Endothelial cell of umbilical vein (primary cell): ENCODE measurements at regions of chr19 and their contacts with region 1.

Region 1: GRCh38 chr19:57578487-57579205 is at the start of gene ZNF416:
- DNase-seq: peak; percentile 96
- H3K4me3 ChIP-seq: peak within 1 kb of the TSS; percentile 79 to 93 (median 85)
- H3K27ac ChIP-seq: no peak within 1 kb of the TSS
- H3K4me1 ChIP-seq: peaks cover 10% of the 10 kb centered on the region
- H3K27me3 ChIP-seq: no peaks in the 10 kb centered on the region
- CTCF ChIP-seq: no peak
- POLR2A ChIP-seq: no peak
- total RNA-seq, gene ZNF416: 3.8 and 4.2 TPM in 2 replicates

Region 2: GRCh38 chr19:57435062-57435978 is 143.3 kb before region 1 on chr19 and contains the start of gene ZNF749:
- CTCF ChIA-PET with region 1: no interaction called
- POLR2A ChIA-PET with region 1: no interaction called
- dilution Hi-C with region 1: no loop called
- intact Hi-C with region 1: loop called (anchors 1 kb)
- DNase-seq: peak; percentile 98
- H3K4me3 ChIP-seq: peak within 1 kb of the TSS; percentile 58 to 81 (median 68)
- H3K27ac ChIP-seq: no peak within 1 kb of the TSS
- H3K4me1 ChIP-seq: peaks cover 10% of the 10 kb centered on the region
- H3K27me3 ChIP-seq: no peaks in the 10 kb centered on the region
- CTCF ChIP-seq: no peak
- POLR2A ChIP-seq: peak; percentile 14
- total RNA-seq, gene ZNF749: 8.9 and 11.5 TPM in 2 replicates

Region 3: GRCh38 chr19:57527136-57527881 is 51.3 kb before region 1 on chr19 and contains the start of gene ZNF549:
- CTCF ChIA-PET with region 1: no interaction called
- POLR2A ChIA-PET with region 1: no interaction called
- dilution Hi-C with region 1: no loop called
- intact Hi-C with region 1: loop called (anchors 5 kb)
- DNase-seq: peak; percentile 86
- H3K4me3 ChIP-seq: peak within 1 kb of the TSS; percentile 47 to 69 (median 63)
- H3K27ac ChIP-seq: peak within 1 kb of the TSS; percentile 7
- H3K4me1 ChIP-seq: peaks cover 3% of the 10 kb centered on the region
- H3K27me3 ChIP-seq: no peaks in the 10 kb centered on the region
- CTCF ChIP-seq: no peak
- POLR2A ChIP-seq: no peak
- total RNA-seq, gene ZNF549: 3.1 and 3.5 TPM in 2 replicates

Region 4: DNA sequence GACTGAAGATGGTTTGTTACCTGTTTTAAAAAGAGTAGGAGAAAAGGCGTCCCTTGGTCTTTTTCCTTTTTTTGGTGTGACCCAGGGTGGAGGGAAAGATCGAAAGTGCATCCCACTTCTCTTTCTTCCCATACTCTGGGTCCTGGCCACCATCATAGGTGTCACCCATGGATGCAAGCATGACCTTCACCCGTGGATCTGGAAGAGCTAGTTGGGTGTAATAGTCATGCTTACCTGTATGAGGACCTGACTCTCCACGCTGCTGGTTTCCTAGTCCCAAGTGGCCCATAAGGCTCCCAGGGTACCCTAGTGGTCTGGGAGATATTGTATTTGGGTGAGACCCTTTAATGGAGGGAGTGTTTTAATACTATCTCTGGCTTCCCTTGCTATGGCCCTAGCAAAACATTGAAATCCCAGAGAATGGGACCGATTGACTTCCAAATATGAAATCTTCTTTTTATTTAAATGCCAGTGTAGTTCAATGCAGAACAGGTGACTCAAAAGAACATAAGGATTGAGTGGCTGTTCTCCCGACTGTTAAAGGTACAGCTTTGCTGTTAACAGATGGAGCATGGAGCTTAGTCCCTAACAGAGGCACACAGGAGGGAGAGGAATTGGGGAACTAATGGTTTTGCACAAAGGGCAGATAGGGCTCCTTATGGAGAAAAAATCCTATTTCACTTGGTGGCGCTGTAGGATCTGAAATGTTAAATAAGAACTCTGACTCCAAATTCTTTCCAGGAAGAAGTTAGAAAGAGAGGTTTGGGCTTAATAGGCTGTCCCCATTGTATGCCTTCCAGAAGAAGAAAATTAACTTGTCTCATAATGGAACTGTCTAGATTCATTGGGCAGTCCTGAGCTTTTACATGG is 12.0 kb before region 1 on chr19:
- CTCF ChIA-PET with region 1: no interaction called
- POLR2A ChIA-PET with region 1: no interaction called
- dilution Hi-C with region 1: no loop called
- intact Hi-C with region 1: no loop called
- DNase-seq: no peak
- H3K4me3 ChIP-seq: no peak overlapping the region
- H3K27ac ChIP-seq: no peak overlapping the region
- H3K4me1 ChIP-seq: no peaks in the 10 kb centered on the region
- H3K27me3 ChIP-seq: no peaks in the 10 kb centered on the region
- CTCF ChIP-seq: no peak
- POLR2A ChIP-seq: no peak

Region 5: GRCh38 chr19:57599761-57600383 is 21.2 kb after region 1 on chr19 and contains the start of gene ZNF530:
- CTCF ChIA-PET with region 1: interaction called, 3 read pairs
- POLR2A ChIA-PET with region 1: no interaction called
- dilution Hi-C with region 1: no loop called
- intact Hi-C with region 1: loop called (anchors 1 kb)
- DNase-seq: peak; percentile 81
- H3K4me3 ChIP-seq: peak within 1 kb of the TSS; percentile 38 to 76 (median 61)
- H3K27ac ChIP-seq: no peak within 1 kb of the TSS
- H3K4me1 ChIP-seq: peaks cover 2% of the 10 kb centered on the region
- H3K27me3 ChIP-seq: no peaks in the 10 kb centered on the region
- CTCF ChIP-seq: no peak
- POLR2A ChIP-seq: no peak
- total RNA-seq, gene ZNF530: 4.0 TPM in 2 replicates

Region 6: GRCh38 chr19:57613941-57614743 is 35.5 kb after region 1 on chr19 and contains the start of gene ZNF134:
- CTCF ChIA-PET with region 1: no interaction called
- POLR2A ChIA-PET with region 1: no interaction called
- dilution Hi-C with region 1: no loop called
- intact Hi-C with region 1: loop called (anchors 1 kb)
- DNase-seq: peak; percentile 84
- H3K4me3 ChIP-seq: peak within 1 kb of the TSS; percentile 53 to 77 (median 65)
- H3K27ac ChIP-seq: no peak within 1 kb of the TSS
- H3K4me1 ChIP-seq: no peaks in the 10 kb centered on the region
- H3K27me3 ChIP-seq: no peaks in the 10 kb centered on the region
- CTCF ChIP-seq: peak in 1 of 2 donors; percentile 62
- POLR2A ChIP-seq: peak; percentile 49
- total RNA-seq, gene ZNF134: 11.1 and 12.3 TPM in 2 replicates

Region 7: DNA sequence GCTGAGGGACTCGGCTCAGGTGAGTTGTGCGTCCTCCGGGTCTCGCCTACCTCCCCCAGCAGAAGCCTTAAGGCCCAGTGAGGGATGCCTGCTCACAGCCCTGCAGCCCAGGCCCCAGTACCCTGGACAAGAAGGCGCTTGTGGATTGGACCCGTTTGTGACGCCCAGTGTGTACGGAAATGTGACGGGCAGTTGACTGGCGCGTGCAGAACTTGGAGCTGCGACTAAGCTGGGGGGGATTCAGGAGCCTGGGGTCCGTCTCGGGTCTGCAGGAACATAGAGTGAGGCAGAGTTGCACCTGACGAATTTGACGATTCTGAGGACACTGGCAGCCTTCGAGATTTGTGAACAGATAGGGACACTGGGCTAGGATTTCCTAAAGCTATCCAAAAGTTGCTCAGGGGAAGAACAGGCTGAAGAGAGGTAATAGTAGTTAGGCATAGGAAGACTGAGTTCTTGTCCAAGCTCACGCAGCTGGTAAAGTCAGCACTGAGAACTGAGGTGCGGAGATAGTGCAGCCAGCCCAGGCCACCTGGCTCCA is 103.7 kb after region 1 on chr19:
- CTCF ChIA-PET with region 1: no interaction called
- POLR2A ChIA-PET with region 1: no interaction called
- dilution Hi-C with region 1: no loop called
- intact Hi-C with region 1: loop called (anchors 1 kb)
- DNase-seq: no peak
- H3K4me3 ChIP-seq: peak overlapping the region; percentile 57 to 87 (median 77)
- H3K27ac ChIP-seq: peak overlapping the region; percentile 7
- H3K4me1 ChIP-seq: peaks cover 8% of the 10 kb centered on the region
- H3K27me3 ChIP-seq: no peaks in the 10 kb centered on the region
- CTCF ChIP-seq: no peak
- POLR2A ChIP-seq: no peak